ENCODE measurements at regions of chr3 and their contacts with region 1.

Region 1: DNA sequence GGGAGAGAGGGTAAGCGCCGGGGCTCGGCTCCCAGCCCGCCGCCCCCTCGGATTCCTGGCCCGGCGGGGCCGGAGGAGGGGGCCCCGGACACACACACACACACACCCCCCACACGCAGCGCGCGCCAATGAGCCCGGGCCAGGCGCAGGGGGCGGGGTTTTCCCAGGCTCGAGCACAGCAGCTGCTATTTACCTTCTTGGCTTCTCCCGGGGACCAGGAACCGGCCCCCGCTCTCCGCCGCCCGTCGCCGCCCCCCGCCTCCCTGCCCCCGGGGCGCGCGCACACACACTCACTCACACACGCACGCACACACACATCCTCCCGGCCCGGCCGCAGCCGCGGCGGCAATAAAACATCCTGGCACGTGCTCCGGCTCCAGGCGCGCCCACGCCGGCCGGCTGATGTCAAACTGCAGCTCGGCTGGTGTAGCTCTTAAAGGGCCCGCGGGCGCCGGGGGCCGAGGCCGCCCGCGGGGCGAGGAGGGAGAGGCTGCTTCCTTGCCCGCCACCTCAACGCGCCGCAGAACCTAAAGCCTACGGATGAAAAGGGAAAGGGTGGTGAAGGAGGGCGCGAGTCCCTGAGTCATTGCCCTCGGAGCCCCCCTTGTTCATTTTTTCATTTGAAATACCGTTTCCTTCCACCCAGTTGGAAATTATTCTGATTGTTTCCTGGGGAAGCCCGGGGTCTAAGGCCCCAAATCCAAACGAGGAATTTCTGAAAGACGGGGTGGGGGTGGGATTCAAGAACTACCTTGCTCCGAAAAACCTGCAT is 1.0 kb upstream of the HES1 start:
- DNase-seq: peak; percentile 94
- H3K4me3 Mint-ChIP-seq: peak overlapping the region; percentile 90
- H3K27ac Mint-ChIP-seq: peak overlapping the region; percentile 95
- H3K4me1 Mint-ChIP-seq: peaks cover 53% of the 10 kb centered on the region
- H3K27me3 Mint-ChIP-seq: peaks cover 76% of the 10 kb centered on the region

Region 2: GRCh38 chr3:193592944-193593667 is 541.8 kb before region 1 on chr3 and contains the start of gene OPA1:
- intact Hi-C with region 1: loop called (anchors 10 kb)
- DNase-seq: peak; percentile 98
- H3K4me3 Mint-ChIP-seq: peak within 1 kb of the TSS; percentile 98
- H3K27ac Mint-ChIP-seq: peak within 1 kb of the TSS; percentile 99
- H3K4me1 Mint-ChIP-seq: peaks cover 27% of the 10 kb centered on the region
- H3K27me3 Mint-ChIP-seq: no peaks in the 10 kb centered on the region
- total RNA-seq, gene OPA1: 91.2 and 92.2 TPM in 2 replicates

Region 3: GRCh38 chr3:193780810-193781472 is 354.0 kb before region 1 on chr3:
- intact Hi-C with region 1: loop called (anchors 5 kb)
- DNase-seq: peak; percentile 63
- H3K4me3 Mint-ChIP-seq: no peak overlapping the region
- H3K27ac Mint-ChIP-seq: no peak overlapping the region
- H3K4me1 Mint-ChIP-seq: peaks cover 16% of the 10 kb centered on the region
- H3K27me3 Mint-ChIP-seq: peaks cover 43% of the 10 kb centered on the region

Region 4: GRCh38 chr3:194204042-194204987 is 69.4 kb after region 1 on chr3:
- intact Hi-C with region 1: loop called (anchors 5 kb)
- DNase-seq: peak; percentile 78
- H3K4me3 Mint-ChIP-seq: peak overlapping the region; percentile 83
- H3K27ac Mint-ChIP-seq: peak overlapping the region; percentile 45
- H3K4me1 Mint-ChIP-seq: peaks cover 29% of the 10 kb centered on the region
- H3K27me3 Mint-ChIP-seq: peaks cover 17% of the 10 kb centered on the region

Region 5: DNA sequence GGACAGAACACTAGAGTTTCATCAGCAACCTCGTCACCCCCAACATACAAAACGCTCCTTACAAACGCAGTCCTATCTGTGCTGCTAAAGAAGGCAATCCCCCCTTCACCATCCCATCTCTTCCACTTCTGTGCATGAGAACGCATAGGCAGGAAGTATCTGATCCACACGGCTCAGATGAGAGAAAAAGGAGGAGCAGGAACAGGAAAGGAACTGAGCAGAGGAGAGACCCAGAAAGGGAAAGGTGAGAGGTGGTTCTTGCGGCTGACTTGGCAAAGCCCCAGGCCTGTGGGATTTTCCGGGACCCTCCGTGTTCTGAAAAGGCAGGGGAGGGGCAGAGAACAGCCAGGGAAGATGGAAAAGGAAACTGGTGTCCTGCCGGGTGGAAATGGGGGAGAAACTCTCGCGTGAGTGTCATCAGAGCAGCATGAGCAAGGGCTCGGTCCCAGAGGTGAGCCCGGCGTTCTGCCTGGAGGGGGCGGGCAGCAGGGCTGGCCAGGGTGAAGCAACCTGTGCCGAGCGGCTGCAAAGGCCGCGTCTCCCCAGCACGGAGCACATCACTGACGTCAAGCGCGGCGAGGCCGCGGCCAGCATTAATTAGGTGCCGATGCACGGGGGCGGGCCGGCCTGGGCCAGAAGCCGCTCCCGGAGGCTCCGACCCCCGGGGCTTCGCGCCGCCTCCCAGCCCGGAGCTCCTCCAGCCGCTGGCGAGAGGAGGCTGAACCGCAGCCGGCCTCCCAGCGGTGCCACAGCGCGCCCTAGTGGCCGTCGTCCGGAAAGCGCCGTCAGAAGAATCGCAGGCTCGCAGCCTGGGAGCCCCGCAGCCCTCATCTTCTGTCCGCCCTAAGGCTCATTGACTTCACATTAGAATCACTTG is 180.4 kb after region 1 on chr3:
- intact Hi-C with region 1: loop called (anchors 2 kb)
- DNase-seq: peak; percentile 96
- H3K4me3 Mint-ChIP-seq: peak overlapping the region; percentile 67
- H3K27ac Mint-ChIP-seq: peak overlapping the region; percentile 0
- H3K4me1 Mint-ChIP-seq: peaks cover 40% of the 10 kb centered on the region
- H3K27me3 Mint-ChIP-seq: peaks cover 9% of the 10 kb centered on the region

Region 6: GRCh38 chr3:194682694-194683310 is 547.9 kb after region 1 on chr3:
- intact Hi-C with region 1: loop called (anchors 5 kb)
- DNase-seq: peak; percentile 91
- H3K4me3 Mint-ChIP-seq: no peak overlapping the region
- H3K27ac Mint-ChIP-seq: no peak overlapping the region
- H3K4me1 Mint-ChIP-seq: peaks cover 37% of the 10 kb centered on the region
- H3K27me3 Mint-ChIP-seq: peaks cover 34% of the 10 kb centered on the region

Measured in activated CD4-positive, alpha-beta T cell treated with anti-CD3 and anti-CD28 coated beads, Interleukin-2, amount 10 ng/mL, durations not matched to agents 24 days and 14 days (primary cell).